ENCODE measurements at regions of chr13 and their contacts with region 1.

Region 1: GRCh38 chr13:28679628-28680027 is 20.7 kb downstream of the POMP start:
- H3K4me3 Mint-ChIP-seq: no peak overlapping the region
- H3K27ac Mint-ChIP-seq: no peak overlapping the region
- H3K4me1 Mint-ChIP-seq: peaks cover 9% of the 10 kb centered on the region
- H3K27me3 Mint-ChIP-seq: no peaks in the 10 kb centered on the region

Region 2: GRCh38 chr13:28659621-28659970 is 20.0 kb before region 1 on chr13:
- intact Hi-C with region 1: no loop called
- H3K4me3 Mint-ChIP-seq: peak overlapping the region; percentile 91
- H3K27ac Mint-ChIP-seq: peak overlapping the region; percentile 89
- H3K4me1 Mint-ChIP-seq: peaks cover 60% of the 10 kb centered on the region
- H3K27me3 Mint-ChIP-seq: no peaks in the 10 kb centered on the region

Region 3: DNA sequence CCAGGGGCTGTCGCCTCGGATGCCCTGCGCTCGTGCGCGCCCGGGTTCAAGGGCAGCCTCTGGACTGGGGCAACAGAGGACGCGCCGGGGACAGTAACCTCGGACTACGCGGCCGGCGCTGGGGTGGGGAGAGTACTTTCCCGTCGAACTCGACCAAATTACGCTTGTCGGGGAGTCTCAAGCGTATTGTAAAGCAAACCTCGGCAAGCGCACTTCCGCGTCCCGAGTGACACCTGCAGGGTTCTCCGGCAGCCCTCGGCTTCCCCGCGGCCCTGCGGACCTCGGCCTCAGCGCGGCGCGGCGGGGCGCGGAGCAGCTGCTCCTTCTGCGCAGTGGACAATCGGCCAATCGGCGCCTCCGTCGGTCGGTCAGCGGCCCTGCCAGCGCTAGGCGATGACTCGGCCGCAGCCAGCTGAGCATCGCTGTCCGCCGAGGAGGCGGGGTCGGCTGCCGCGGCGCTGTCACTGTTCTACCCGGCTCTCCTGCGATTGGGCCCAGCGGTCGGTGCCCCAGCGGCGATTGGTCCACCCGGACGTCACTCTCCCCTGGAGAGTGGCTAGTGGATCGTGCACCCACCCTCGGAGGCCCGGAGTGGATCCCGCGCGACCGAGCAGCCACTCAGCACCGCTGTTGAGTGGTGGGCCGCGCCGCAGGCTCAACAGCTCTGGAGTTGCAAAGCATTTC is 39.1 kb after region 1 on chr13 and contains the start of gene SLC46A3:
- intact Hi-C with region 1: loop called (anchors 5 kb)
- H3K4me3 Mint-ChIP-seq: peak within 1 kb of the TSS; percentile 94
- H3K27ac Mint-ChIP-seq: peak within 1 kb of the TSS; percentile 95
- H3K4me1 Mint-ChIP-seq: peaks cover 39% of the 10 kb centered on the region
- H3K27me3 Mint-ChIP-seq: peaks cover under 1% of the 10 kb centered on the region

Measured in dendritic cell treated with granulocyte-macrophage colony-stimulating factor and Interleukin-4, amounts not matched to agents 40 ng/mL and 50 ng/mL, for 4 days (primary cell).